ENCODE measurements at regions of chr15 and their contacts with region 1.

Region 1: GRCh38 chr15:56786966-56787365 is 53.7 kb upstream of the ZNF280D start:
- DNase-seq: no peak
- H3K4me3 Mint-ChIP-seq: peak overlapping the region; percentile 30
- H3K27ac Mint-ChIP-seq: peak overlapping the region; percentile 76
- H3K4me1 Mint-ChIP-seq: peaks cover 14% of the 10 kb centered on the region
- H3K27me3 Mint-ChIP-seq: peaks cover 2% of the 10 kb centered on the region

Region 2: DNA sequence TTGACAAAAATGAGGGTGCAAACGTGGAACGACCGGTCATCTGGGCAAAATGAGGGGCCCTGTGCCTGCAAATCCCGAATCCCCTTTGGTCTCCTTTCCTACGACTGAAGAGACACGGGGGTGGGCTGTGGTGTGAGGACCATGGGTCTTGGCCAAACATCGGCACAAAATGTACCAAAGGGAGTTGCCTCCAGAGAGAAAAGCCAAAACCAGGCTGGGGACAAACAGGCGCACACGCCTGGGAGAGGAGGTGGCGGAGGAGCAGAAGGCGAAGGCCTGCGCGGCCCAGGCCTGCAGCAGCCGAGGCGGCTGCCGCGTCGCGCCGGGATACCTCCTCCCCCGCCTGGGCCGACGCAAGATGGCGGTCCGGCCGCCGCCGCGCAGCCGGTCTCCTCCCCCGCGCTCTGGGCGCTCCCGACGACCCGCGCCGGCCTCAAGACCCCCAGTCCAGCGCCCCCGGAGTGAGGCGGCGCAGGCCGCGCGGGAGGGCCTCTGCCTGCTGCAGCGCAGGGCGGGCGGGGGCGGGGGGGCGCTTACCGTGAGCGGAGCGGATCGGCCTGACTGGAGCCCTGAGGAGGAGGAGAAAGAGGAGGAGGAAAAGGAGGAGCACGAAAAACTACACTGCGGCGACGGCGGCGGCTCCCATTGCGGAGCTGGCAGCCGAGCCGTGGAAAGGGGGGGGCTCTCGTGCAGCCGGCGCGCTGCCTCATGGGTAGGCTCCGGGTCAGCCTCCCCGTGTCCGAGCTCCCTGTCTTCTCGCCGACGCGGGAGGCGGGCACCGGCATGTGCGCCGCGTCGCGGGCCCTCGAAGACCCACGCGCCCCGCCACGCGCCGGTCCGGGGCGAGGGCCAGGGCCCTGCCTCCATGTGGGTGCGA is 53.8 kb before region 1 on chr15 and contains the start of gene ZNF280D:
- CTCF ChIA-PET with region 1: interaction called, 5 read pairs
- POLR2A ChIA-PET with region 1: interaction called, 4 read pairs
- intact Hi-C with region 1: loop called (anchors 5 kb)
- DNase-seq: peak; percentile 85
- H3K4me3 Mint-ChIP-seq: peak within 1 kb of the TSS; percentile 93
- H3K27ac Mint-ChIP-seq: peak within 1 kb of the TSS; percentile 93
- H3K4me1 Mint-ChIP-seq: peaks cover 32% of the 10 kb centered on the region
- H3K27me3 Mint-ChIP-seq: no peaks in the 10 kb centered on the region
- total RNA-seq, gene ZNF280D: 18.0 to 19.3 TPM

Region 3: DNA sequence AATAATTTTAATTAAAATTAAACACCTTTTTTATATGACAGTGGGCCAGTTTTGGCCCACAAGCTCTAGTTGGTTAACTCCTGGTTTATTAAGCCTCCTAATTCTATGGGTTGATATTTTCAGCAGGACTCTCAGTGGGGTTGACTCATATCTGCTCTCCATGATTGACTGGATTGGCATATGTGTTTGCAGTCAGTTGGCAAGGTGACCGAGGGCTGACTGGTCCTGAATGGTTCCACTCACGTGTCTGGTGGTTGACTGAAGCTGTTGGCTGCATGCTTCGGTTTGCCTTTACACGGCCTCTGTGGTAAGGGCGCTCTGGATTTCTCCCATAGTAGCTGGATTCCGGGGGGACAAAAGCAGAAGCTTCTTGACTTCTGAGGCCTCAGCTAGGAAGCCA is 11.7 kb after region 1 on chr15:
- CTCF ChIA-PET with region 1: interaction called, 5 read pairs
- POLR2A ChIA-PET with region 1: interaction called, 3 read pairs
- intact Hi-C with region 1: loop called (anchors 1 kb)
- DNase-seq: peak; percentile 79
- H3K4me3 Mint-ChIP-seq: no peak overlapping the region
- H3K27ac Mint-ChIP-seq: no peak overlapping the region
- H3K4me1 Mint-ChIP-seq: peaks cover 8% of the 10 kb centered on the region
- H3K27me3 Mint-ChIP-seq: peaks cover 8% of the 10 kb centered on the region

Region 4: DNA sequence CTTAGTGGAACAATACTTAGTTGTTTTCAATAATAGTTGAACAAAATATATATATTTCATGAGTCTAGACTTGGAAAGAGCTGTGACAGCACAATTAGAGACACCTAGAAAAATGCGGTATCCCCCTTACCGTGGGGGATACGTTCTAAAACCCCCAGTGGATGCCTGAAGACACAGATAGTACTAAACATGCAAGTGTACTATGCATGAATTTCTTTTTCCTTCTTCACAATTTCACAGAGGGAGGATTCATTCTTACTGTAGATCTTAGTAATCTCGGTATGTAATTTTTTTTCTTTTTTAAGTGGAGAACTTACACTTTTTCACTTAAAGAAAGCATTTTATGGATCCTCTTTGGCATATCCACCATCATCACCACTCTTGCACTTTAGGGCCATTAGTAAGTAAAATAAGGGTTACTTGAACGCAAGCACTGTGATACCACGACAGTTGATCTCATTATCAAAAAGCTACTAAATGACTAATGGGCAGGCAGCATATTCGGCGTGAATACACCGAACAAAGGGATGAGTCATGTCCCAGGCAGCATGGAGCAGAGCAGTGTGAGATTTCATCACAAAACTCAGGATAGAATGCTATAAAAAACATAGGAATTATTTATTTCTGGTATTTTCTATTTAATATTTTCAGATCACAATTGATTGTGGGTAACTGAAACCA is 18.6 kb after region 1 on chr15:
- CTCF ChIA-PET with region 1: interaction called, 3 read pairs
- POLR2A ChIA-PET with region 1: interaction called, 3 read pairs
- intact Hi-C with region 1: loop called (anchors 2 kb)
- DNase-seq: peak; percentile 57
- H3K4me3 Mint-ChIP-seq: peak overlapping the region; percentile 34
- H3K27ac Mint-ChIP-seq: peak overlapping the region; percentile 33
- H3K4me1 Mint-ChIP-seq: peaks cover 6% of the 10 kb centered on the region
- H3K27me3 Mint-ChIP-seq: peaks cover 7% of the 10 kb centered on the region

Measured in activated CD4-positive, alpha-beta memory T cell treated with anti-CD3 and anti-CD28 coated beads for 36 hours (primary cell).